ENCODE measurements at regions of chr7 and their contacts with region 1.

Region 1: GRCh38 chr7:29408841-29409243 is 154.8 kb upstream of the PRR15 start:
- DNase-seq: peak in 1 of 2 donors; percentile 48
- H3K4me3 ChIP-seq: no peak overlapping the region
- H3K27ac ChIP-seq: no peak overlapping the region
- H3K4me1 ChIP-seq: no peaks in the 10 kb centered on the region
- H3K27me3 ChIP-seq: peaks cover 0 to 10% of the 10 kb centered on the region in 2 donors
- CTCF ChIP-seq: peak; percentile 82

Region 2: DNA sequence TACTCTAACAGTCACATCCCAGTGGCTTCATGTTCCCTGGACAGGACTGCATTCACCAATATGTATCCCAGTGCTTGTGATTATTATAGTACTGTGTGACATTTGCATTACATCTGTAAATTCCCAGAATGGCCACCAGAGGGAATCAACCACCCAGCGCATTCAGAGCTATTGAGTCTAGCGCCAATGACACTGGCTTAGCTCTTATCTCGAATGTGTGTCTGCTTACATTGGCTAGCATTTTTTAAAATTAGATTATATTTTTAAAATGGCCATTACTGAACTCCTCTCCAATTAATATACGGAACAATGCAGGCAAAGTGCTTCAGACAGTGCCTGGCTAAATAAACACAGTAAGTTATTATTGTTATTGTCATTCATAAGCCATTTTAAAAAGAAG is 487.0 kb before region 1 on chr7:
- intact Hi-C with region 1: loop called (anchors 5 kb)
- DNase-seq: peak in 1 of 2 donors; percentile 36
- H3K4me3 ChIP-seq: no peak overlapping the region
- H3K27ac ChIP-seq: no peak overlapping the region
- H3K4me1 ChIP-seq: peaks cover 0 to 13% (median 5%) of the 10 kb centered on the region in 4 donors
- H3K27me3 ChIP-seq: no peaks in the 10 kb centered on the region
- CTCF ChIP-seq: peak; percentile 82 to 86

Region 3: GRCh38 chr7:29113384-29114103 is 295.3 kb before region 1 on chr7:
- intact Hi-C with region 1: loop called (anchors 10 kb)
- DNase-seq: no peak
- H3K4me3 ChIP-seq: no peak overlapping the region
- H3K27ac ChIP-seq: no peak overlapping the region
- H3K4me1 ChIP-seq: no peaks in the 10 kb centered on the region
- H3K27me3 ChIP-seq: peaks cover 0 to 8% of the 10 kb centered on the region in 2 donors
- CTCF ChIP-seq: no peak

Region 4: DNA sequence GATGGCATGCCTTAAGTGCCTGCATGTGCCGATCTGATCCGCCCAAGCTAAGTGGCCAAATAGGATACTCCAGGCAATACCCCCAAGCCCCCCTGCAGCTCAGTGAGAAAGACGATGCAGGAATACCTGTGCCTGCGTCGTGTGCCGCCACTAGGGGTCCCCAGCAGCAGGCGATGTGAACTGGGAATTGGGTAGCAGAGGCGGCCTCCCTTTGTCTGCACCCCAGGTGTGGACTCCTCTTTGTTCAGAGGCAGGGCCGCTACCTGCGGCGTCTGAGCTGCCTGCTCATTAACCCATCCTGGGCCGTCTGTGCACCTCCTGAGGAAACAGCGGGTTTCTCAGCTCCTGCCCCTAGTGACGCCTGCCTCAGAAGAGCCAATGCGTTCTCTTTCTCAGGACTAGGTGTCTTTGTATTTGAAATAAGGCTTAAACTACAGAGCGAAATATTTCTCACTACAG is 219.1 kb before region 1 on chr7:
- intact Hi-C with region 1: loop called (anchors 10 kb)
- DNase-seq: peak in 1 of 2 donors; percentile 43
- H3K4me3 ChIP-seq: no peak overlapping the region
- H3K27ac ChIP-seq: no peak overlapping the region
- H3K4me1 ChIP-seq: peaks cover 0 to 11% (median 10%) of the 10 kb centered on the region in 4 donors
- H3K27me3 ChIP-seq: peaks cover 0 to 25% of the 10 kb centered on the region in 2 donors
- CTCF ChIP-seq: peak; percentile 52 to 56

Region 5: GRCh38 chr7:29639881-29640595 is 231.2 kb after region 1 on chr7:
- intact Hi-C with region 1: no loop called
- DNase-seq: no peak
- H3K4me3 ChIP-seq: no peak overlapping the region
- H3K27ac ChIP-seq: no peak overlapping the region
- H3K4me1 ChIP-seq: peaks cover 0 to 23% (median 5%) of the 10 kb centered on the region in 4 donors
- H3K27me3 ChIP-seq: no peaks in the 10 kb centered on the region
- CTCF ChIP-seq: no peak

Region 6: GRCh38 chr7:30001998-30002397 is 593.2 kb after region 1 on chr7:
- intact Hi-C with region 1: no loop called
- DNase-seq: no peak
- H3K4me3 ChIP-seq: no peak overlapping the region
- H3K27ac ChIP-seq: no peak overlapping the region
- H3K4me1 ChIP-seq: peaks cover 0 to 23% (median 5%) of the 10 kb centered on the region in 4 donors
- H3K27me3 ChIP-seq: no peaks in the 10 kb centered on the region
- CTCF ChIP-seq: no peak